ENCODE measurements at regions of chr6 and their contacts with region 1.

Region 1: DNA sequence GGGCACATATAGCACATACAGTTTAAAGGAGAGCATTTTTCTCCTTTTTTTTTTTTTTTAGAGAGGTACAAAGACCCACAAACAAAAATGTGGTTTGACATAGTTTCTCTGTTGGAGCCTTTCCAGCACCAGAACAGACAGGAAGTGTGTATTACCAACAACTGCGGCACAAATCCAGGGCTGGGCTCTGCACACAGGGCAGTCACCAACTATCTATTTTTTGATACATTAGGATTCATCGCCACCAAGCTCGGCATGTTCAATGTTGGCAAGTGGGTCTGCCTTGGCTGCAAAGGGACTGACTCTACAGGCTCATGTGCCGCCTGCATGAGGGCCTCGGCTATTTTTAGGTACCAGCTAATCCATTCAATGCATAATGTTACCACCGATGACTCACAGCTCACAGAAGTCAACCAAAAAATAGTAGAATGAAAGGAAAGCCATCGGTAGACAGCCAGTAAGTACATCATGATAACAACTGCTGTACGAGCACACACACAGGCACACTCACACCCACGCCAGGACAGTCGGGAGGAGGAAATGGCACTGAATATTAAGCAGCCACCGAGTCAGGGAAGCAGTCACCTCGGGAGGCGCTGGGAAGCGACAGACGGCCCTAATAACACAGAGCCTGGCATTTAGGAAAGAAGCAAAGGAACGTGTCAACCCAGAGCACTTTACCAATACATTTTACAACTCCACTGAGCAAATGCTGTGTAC is 81.6 kb downstream of the GMPR start:
- DNase-seq: peak; percentile 80
- ATAC-seq: peak; percentile 62
- H3K4me3 Mint-ChIP-seq: peak overlapping the region; percentile 67
- H3K27ac Mint-ChIP-seq: peak overlapping the region; percentile 93
- H3K4me1 Mint-ChIP-seq: peaks cover 76% of the 10 kb centered on the region
- H3K27me3 Mint-ChIP-seq: no peaks in the 10 kb centered on the region

Region 2: GRCh38 chr6:15776458-15776980 is 543.5 kb before region 1 on chr6:
- CTCF ChIA-PET with region 1: no interaction called
- POLR2A ChIA-PET with region 1: no interaction called
- intact Hi-C with region 1: loop called in 1 of 2 experiments (anchors 2 kb)
- DNase-seq: peak; percentile 71
- ATAC-seq: peak; percentile 89
- H3K4me3 Mint-ChIP-seq: peak overlapping the region; percentile 59
- H3K27ac Mint-ChIP-seq: peak overlapping the region; percentile 92
- H3K4me1 Mint-ChIP-seq: peaks cover 73% of the 10 kb centered on the region
- H3K27me3 Mint-ChIP-seq: no peaks in the 10 kb centered on the region

Region 3: GRCh38 chr6:16238057-16238962 is 81.7 kb before region 1 on chr6 and contains the start of gene GMPR:
- CTCF ChIA-PET with region 1: interaction called, 4 read pairs
- POLR2A ChIA-PET with region 1: no interaction called
- intact Hi-C with region 1: loop called in 1 of 2 experiments (anchors 1 kb)
- DNase-seq: peak; percentile 83
- ATAC-seq: peak; percentile 94
- H3K4me3 Mint-ChIP-seq: peak within 1 kb of the TSS; percentile 74
- H3K27ac Mint-ChIP-seq: peak within 1 kb of the TSS; percentile 8
- H3K4me1 Mint-ChIP-seq: peaks cover 25% of the 10 kb centered on the region
- H3K27me3 Mint-ChIP-seq: peaks cover 33% of the 10 kb centered on the region
- total RNA-seq, gene GMPR: 1.4 to 1.6 TPM

Region 4: GRCh38 chr6:16471222-16471909 is 151.4 kb after region 1 on chr6:
- CTCF ChIA-PET with region 1: no interaction called
- POLR2A ChIA-PET with region 1: interaction called, 3 read pairs
- intact Hi-C with region 1: loop called (anchors 1 to 2 kb)
- DNase-seq: peak; percentile 36
- ATAC-seq: peak; percentile 45
- H3K4me3 Mint-ChIP-seq: no peak overlapping the region
- H3K27ac Mint-ChIP-seq: peak overlapping the region; percentile 60
- H3K4me1 Mint-ChIP-seq: peaks cover 79% of the 10 kb centered on the region
- H3K27me3 Mint-ChIP-seq: no peaks in the 10 kb centered on the region

Region 5: DNA sequence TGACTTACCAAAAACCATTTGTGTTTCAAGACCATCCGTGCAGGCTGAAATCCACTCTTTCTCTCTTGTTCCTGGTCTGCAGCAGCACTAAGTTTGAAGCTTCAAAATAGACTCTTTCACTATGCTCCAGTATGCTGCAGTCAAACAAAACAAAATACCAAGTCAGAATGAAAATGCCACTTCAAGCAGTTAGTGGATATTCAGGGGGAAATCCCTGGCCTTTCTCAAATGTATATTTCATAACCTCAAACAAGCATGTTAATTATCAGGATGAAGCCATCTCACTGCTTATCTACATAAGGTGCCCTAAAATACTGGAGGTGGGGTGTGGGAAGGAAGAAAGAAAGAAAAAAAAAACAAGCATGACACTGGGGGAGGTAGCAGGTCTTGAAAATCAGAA is 337.8 kb after region 1 on chr6:
- CTCF ChIA-PET with region 1: interaction called, 4 read pairs
- POLR2A ChIA-PET with region 1: interaction called, 3 read pairs
- intact Hi-C with region 1: loop called (anchors 2 to 5 kb)
- DNase-seq: no peak
- ATAC-seq: peak; percentile 70
- H3K4me3 Mint-ChIP-seq: peak overlapping the region; percentile 39
- H3K27ac Mint-ChIP-seq: peak overlapping the region; percentile 81
- H3K4me1 Mint-ChIP-seq: peaks cover 68% of the 10 kb centered on the region
- H3K27me3 Mint-ChIP-seq: no peaks in the 10 kb centered on the region

Region 6: GRCh38 chr6:16949716-16950115 is 629.7 kb after region 1 on chr6:
- CTCF ChIA-PET with region 1: no interaction called
- POLR2A ChIA-PET with region 1: no interaction called
- intact Hi-C with region 1: loop called in 1 of 2 experiments (anchors 5 kb)
- DNase-seq: no peak
- ATAC-seq: no peak
- H3K4me3 Mint-ChIP-seq: no peak overlapping the region
- H3K27ac Mint-ChIP-seq: no peak overlapping the region
- H3K4me1 Mint-ChIP-seq: peaks cover 21% of the 10 kb centered on the region
- H3K27me3 Mint-ChIP-seq: peaks cover 45% of the 10 kb centered on the region

Region 7: DNA sequence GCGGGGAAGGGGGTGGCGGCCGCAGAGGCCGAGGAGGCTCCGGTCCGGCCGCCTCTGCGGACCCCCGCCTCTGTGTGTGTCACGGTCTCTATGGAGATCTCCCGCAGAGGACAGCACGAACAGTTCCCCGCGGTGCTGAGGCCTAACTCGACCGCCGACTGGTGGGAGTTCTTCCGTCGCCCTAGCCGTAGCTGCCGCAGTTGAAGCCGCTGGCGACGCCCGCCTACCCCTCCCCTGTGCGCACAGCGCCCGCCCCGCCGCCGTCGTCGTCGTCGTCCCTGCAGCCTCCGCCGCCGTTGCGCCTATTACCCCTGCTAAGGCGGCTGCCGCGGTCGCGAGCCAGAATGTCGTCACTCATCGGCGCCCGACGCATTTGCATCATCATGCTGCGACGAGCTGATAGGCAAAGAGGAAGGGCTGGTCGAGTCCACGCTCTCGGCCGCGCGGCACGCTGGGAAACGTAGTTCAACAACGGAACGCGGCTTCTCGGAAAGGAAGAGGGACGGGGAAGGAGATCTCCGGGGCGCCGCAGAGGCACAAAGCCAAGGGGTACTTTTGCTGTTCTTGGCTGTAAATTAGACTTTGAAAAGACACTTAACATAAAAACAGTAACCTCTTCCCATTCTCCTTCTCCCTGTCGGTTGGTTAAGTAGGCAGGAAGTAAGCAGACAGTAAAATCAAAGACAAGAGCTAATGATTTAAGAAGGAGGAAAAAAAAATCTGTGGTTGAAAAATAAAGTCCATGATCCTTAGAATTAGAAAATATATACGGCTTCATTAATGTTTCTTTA is 1386.8 kb after region 1 on chr6 and contains the start of gene NUP153:
- CTCF ChIA-PET with region 1: interaction called, 3 read pairs
- POLR2A ChIA-PET with region 1: no interaction called
- intact Hi-C with region 1: loop called in 1 of 2 experiments (anchors 2 kb)
- DNase-seq: peak; percentile 99
- ATAC-seq: peak; percentile 70
- H3K4me3 Mint-ChIP-seq: peak within 1 kb of the TSS; percentile 86
- H3K27ac Mint-ChIP-seq: peak within 1 kb of the TSS; percentile 99
- H3K4me1 Mint-ChIP-seq: peaks cover 27% of the 10 kb centered on the region
- H3K27me3 Mint-ChIP-seq: no peaks in the 10 kb centered on the region
- total RNA-seq, gene NUP153: 81.0 to 99.8 TPM